Activated CD8-positive, alpha-beta T cell treated with anti-CD3 and anti-CD28 coated beads for 36 hours (primary cell): ENCODE measurements at regions of chr16 and their contacts with region 1.

Region 1: GRCh38 chr16:4766874-4767628 is at the start of gene ZNF500:
- DNase-seq: peak; percentile 97
- ATAC-seq: peak; percentile 74
- H3K4me3 Mint-ChIP-seq: peak within 1 kb of the TSS; percentile 90
- H3K27ac Mint-ChIP-seq: peak within 1 kb of the TSS; percentile 96
- H3K4me1 Mint-ChIP-seq: peaks cover 30% of the 10 kb centered on the region
- H3K27me3 Mint-ChIP-seq: no peaks in the 10 kb centered on the region
- CTCF ChIP-seq: no peak
- total RNA-seq, gene ZNF500: 10.9 to 12.8 TPM

Region 2: GRCh38 chr16:4846891-4847773 is 80.1 kb after region 1 on chr16 and contains the starts of genes GLYR1 and UBN1:
- CTCF ChIA-PET with region 1: no interaction called
- POLR2A ChIA-PET with region 1: interaction called, 10 read pairs
- intact Hi-C with region 1: loop called (anchors 10 kb)
- DNase-seq: peak; percentile 100
- ATAC-seq: peak; percentile 94
- H3K4me3 Mint-ChIP-seq: peak within 1 kb of the TSS; percentile 83
- H3K27ac Mint-ChIP-seq: peak within 1 kb of the TSS; percentile 84
- H3K4me1 Mint-ChIP-seq: peaks cover 53% of the 10 kb centered on the region
- H3K27me3 Mint-ChIP-seq: no peaks in the 10 kb centered on the region
- CTCF ChIP-seq: no peak
- total RNA-seq, gene GLYR1: 63.7 to 64.8 TPM
- total RNA-seq, gene UBN1: 25.4 to 25.6 TPM